Left colon (tissue), 2 donors: ENCODE measurements at regions of chr9 and their contacts with region 1.

Region 1: GRCh38 chr9:86486891-86487837 is 133.0 kb upstream of the TUT7 start:
- DNase-seq: no peak
- ATAC-seq: no peak

Region 2: DNA sequence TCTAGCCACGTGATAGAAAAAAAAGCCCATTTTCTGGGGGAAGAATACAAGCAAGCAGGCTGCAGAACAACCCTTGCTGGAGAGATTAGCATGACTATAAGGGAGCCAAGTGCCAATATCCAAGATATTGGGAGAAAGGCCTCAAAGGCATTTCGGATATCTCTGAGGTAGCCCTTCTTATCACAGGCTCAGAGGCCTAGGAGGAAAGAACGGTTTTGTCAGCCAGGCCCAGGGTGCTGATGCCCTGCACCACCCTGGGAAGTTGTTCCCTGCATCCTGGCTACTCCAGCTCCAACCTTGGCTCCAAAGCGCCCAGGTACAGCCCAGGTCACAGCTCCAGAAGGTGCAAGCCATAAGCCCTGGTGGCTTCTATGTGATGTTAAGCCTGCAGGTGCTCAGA is 294.1 kb before region 1 on chr9:
- intact Hi-C with region 1: no loop called
- DNase-seq: no peak
- ATAC-seq: no peak

Region 3: DNA sequence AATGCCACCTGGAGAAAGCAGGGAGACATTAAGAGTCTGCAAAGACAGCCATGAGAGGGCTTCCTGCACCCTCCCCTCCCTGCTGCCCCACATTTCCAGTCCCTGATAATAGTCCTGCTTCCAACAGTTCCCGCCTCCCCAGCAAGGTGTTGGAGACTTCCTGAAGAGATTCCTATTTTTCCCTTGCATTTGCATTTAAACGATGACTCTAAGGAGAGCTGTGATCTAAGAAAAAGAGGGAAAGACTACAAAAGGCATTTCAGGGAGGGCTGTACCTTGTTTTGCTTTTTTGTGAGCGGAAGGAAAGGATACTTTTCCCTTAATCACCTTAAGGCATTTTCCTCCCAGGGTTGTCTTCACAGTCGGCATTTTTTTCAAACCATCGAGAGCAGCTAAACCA is 398.1 kb after region 1 on chr9:
- intact Hi-C with region 1: no loop called
- DNase-seq: no peak
- ATAC-seq: no peak

Region 4: GRCh38 chr9:86965636-86966395 is 478.7 kb after region 1 on chr9:
- intact Hi-C with region 1: no loop called
- DNase-seq: no peak
- ATAC-seq: no peak

Region 5: DNA sequence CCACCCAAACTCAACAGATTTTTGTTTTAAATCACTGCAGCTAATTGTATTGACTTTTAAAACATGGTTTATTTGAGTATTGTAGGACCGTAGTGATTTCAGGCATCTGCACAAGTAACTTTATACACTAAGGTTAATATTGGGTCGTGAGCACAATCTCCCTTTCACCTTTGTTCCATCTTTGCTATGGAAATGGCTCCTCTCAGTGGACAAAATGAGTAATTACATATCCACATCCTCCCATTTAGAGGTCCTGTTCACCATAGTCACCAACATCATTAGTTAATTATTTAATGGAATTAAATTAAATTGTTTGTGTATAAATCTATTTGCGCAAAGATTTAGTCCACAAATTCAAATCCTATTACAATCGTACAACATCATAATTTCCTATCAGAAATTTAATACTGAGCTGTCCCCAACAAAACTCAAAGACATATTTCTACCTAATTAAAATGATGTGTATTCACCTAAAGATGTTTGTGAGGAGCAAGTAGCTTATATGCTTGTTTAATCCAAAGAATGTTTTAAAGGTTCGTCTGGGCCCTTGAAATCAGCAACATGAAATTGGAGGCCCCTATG is 837.5 kb after region 1 on chr9:
- intact Hi-C with region 1: loop called in 1 of 2 experiments (anchors 2 kb)
- DNase-seq: no peak
- ATAC-seq: peak; percentile 61